CD8-positive, alpha-beta T cell (primary cell): ENCODE measurements at regions of chr6 and their contacts with region 1.

Region 1: GRCh38 chr6:108260809-108261569 is at the start of gene SNX3:
- DNase-seq: peak; percentile 76 to 95 (median 85)
- ATAC-seq: peak; percentile 79
- H3K4me3 ChIP-seq: peak within 1 kb of the TSS; percentile 64 to 76
- H3K4me3 Mint-ChIP-seq: peak within 1 kb of the TSS; percentile 89
- H3K27ac ChIP-seq: peak within 1 kb of the TSS; percentile 82 to 95
- H3K27ac Mint-ChIP-seq: peak within 1 kb of the TSS; percentile 97
- H3K4me1 ChIP-seq: peaks cover 17% of the 10 kb centered on the region
- H3K4me1 Mint-ChIP-seq: peaks cover 36% of the 10 kb centered on the region
- H3K27me3 ChIP-seq: no peaks in the 10 kb centered on the region
- H3K27me3 Mint-ChIP-seq: no peaks in the 10 kb centered on the region
- CTCF ChIP-seq: no peak
- total RNA-seq, gene SNX3: 37.0 to 40.7 TPM

Region 2: DNA sequence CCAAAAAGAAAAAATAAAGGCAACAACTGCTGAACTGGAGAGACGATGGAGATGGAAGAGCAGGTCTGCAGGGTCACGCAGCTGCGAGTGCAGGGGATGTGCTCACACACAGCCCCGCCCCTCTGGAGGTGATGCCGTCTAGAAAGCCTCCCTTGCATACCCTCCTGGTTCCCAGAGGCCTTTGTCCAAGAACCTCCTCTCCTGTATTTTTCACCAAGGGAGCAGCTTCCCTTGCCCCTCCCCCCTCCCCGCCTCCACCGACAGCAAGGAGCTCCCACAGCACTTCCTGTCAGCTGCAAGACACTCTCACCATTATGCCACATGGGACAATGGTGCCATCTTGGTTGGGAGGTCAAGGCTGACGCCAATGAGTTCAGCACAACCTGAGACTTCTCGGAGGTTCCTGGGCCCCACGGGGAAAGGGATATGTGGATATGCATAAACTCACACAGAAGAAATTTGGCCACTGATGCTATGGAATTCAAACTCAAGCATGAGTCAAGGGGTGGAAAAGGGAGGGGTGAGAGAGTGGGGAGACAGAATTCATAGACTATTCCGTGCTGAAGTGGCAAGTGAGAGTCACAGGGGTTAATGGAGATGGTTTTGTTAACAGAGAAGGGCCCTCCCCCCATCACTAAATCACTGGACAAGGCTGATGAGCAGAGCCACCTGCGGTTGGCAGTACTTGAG is 569.8 kb before region 1 on chr6:
- CTCF ChIA-PET with region 1: no interaction called
- POLR2A ChIA-PET with region 1: no interaction called
- intact Hi-C with region 1: no loop called
- DNase-seq: no peak
- ATAC-seq: no peak
- H3K4me3 ChIP-seq: no peak overlapping the region
- H3K4me3 Mint-ChIP-seq: no peak overlapping the region
- H3K27ac ChIP-seq: no peak overlapping the region
- H3K27ac Mint-ChIP-seq: no peak overlapping the region
- H3K4me1 ChIP-seq: no peaks in the 10 kb centered on the region
- H3K4me1 Mint-ChIP-seq: no peaks in the 10 kb centered on the region
- H3K27me3 ChIP-seq: no peaks in the 10 kb centered on the region
- H3K27me3 Mint-ChIP-seq: no peaks in the 10 kb centered on the region
- CTCF ChIP-seq: no peak

Region 3: GRCh38 chr6:107957909-107958688 is 302.9 kb before region 1 on chr6 and contains the start of gene SEC63:
- CTCF ChIA-PET with region 1: no interaction called
- POLR2A ChIA-PET with region 1: interaction called, 4 read pairs
- intact Hi-C with region 1: loop called in 1 of 2 experiments (anchors 2 kb)
- DNase-seq: peak; percentile 95 to 98 (median 96)
- ATAC-seq: peak; percentile 97
- H3K4me3 ChIP-seq: peak within 1 kb of the TSS; percentile 91
- H3K4me3 Mint-ChIP-seq: peak within 1 kb of the TSS; percentile 98
- H3K27ac ChIP-seq: peak within 1 kb of the TSS; percentile 81 to 82
- H3K27ac Mint-ChIP-seq: peak within 1 kb of the TSS; percentile 92
- H3K4me1 ChIP-seq: peaks cover 16% of the 10 kb centered on the region
- H3K4me1 Mint-ChIP-seq: peaks cover 37% of the 10 kb centered on the region
- H3K27me3 ChIP-seq: no peaks in the 10 kb centered on the region
- H3K27me3 Mint-ChIP-seq: no peaks in the 10 kb centered on the region
- CTCF ChIP-seq: no peak
- total RNA-seq, gene SEC63: 77.8 to 88.2 TPM

Region 4: DNA sequence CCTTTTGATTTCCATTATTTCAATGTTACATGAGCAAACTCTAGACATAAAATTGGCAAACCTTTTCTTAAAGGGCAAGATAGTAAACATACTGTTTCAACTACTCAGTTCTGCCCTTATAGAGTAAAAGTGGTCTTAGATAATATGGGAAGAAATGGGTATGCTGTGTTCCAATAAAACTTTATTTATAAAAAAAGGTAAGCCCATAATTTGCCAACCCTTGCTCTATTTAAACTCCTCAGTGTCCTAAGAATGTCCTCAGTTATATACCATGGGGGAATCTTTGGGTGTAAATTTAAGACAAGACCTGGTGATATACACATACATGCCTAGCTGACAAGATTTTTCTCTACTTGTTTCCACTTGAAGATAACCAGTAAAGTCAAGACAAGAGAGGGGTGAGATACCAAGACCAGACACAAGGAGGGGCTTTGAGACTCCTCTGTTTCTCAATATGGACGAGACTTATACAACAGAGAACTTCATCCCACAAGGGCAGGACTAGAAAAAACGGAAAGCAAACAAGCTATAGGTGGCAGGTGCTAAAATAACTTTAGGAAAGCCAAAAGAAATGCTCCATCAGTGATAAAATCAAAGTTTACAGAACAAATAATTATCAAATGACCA is 10.6 kb before region 1 on chr6:
- CTCF ChIA-PET with region 1: no interaction called
- POLR2A ChIA-PET with region 1: interaction called, 18 read pairs
- intact Hi-C with region 1: no loop called
- DNase-seq: peak in 2 of 9 experiments; percentile 22 to 48
- ATAC-seq: peak; percentile 57
- H3K4me3 ChIP-seq: no peak overlapping the region
- H3K4me3 Mint-ChIP-seq: no peak overlapping the region
- H3K27ac ChIP-seq: no peak overlapping the region
- H3K27ac Mint-ChIP-seq: no peak overlapping the region
- H3K4me1 ChIP-seq: peaks cover 6% of the 10 kb centered on the region
- H3K4me1 Mint-ChIP-seq: peaks cover 57% of the 10 kb centered on the region
- H3K27me3 ChIP-seq: no peaks in the 10 kb centered on the region
- H3K27me3 Mint-ChIP-seq: no peaks in the 10 kb centered on the region
- CTCF ChIP-seq: no peak

Region 5: GRCh38 chr6:108359901-108360882 is 99.2 kb after region 1 on chr6:
- CTCF ChIA-PET with region 1: no interaction called
- POLR2A ChIA-PET with region 1: no interaction called
- intact Hi-C with region 1: loop called in 1 of 2 experiments (anchors 5 kb)
- DNase-seq: peak in 1 of 9 experiments; percentile 5
- ATAC-seq: no peak
- H3K4me3 ChIP-seq: no peak overlapping the region
- H3K4me3 Mint-ChIP-seq: no peak overlapping the region
- H3K27ac ChIP-seq: no peak overlapping the region
- H3K27ac Mint-ChIP-seq: no peak overlapping the region
- H3K4me1 ChIP-seq: no peaks in the 10 kb centered on the region
- H3K4me1 Mint-ChIP-seq: peaks cover 3% of the 10 kb centered on the region
- H3K27me3 ChIP-seq: no peaks in the 10 kb centered on the region
- H3K27me3 Mint-ChIP-seq: no peaks in the 10 kb centered on the region
- CTCF ChIP-seq: no peak

Region 6: DNA sequence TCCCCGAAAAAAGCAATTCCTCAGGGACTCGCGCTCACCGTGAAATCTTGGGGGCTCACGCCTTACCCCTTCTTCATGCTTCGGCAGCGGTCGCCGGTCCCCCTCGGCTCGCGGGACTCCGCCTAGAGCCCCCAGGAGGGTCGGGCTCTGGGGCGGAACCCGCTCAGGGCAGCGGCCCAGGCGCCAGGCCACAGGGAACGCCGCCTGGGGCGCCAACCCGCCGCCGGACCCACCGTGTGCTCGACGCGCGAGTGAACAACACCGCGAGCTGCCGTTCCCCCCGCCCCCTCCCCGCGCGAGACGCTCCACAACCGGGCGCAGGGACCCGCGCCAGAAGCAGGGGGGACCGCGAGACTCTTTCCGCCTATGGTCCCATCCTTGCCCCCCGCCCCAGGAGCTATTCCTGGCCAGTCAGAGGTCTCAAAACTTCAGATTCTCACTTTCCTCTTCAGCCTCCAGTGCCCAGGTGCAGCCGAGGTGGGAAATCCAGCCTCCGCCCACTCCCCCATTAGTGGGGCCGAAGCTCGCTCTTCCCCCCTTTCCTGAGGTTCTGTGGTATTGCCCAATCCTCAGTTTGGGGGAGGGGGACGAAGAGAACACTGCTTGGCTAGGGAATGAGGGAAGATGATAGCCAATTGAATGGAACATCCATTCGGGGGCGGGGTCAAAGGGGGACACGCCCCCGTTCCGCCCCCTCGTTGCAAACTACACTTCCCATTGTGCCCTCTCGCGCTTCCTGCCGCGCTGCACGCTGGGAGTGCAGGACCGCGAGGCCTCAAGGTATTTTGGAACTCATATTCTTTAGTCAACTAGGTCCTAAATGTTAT is 1918.6 kb after region 1 on chr6 and contains the start of gene WASF1:
- CTCF ChIA-PET with region 1: no interaction called
- POLR2A ChIA-PET with region 1: no interaction called
- intact Hi-C with region 1: loop called in 1 of 2 experiments (anchors 10 kb)
- DNase-seq: peak; percentile 77 to 95 (median 89)
- ATAC-seq: peak; percentile 84
- H3K4me3 ChIP-seq: peak within 1 kb of the TSS; percentile 83 to 96
- H3K4me3 Mint-ChIP-seq: peak within 1 kb of the TSS; percentile 77
- H3K27ac ChIP-seq: peak within 1 kb of the TSS; percentile 72 to 79
- H3K27ac Mint-ChIP-seq: peak within 1 kb of the TSS; percentile 38
- H3K4me1 ChIP-seq: peaks cover 28% of the 10 kb centered on the region
- H3K4me1 Mint-ChIP-seq: peaks cover 7% of the 10 kb centered on the region
- H3K27me3 ChIP-seq: no peaks in the 10 kb centered on the region
- H3K27me3 Mint-ChIP-seq: peaks cover 9% of the 10 kb centered on the region
- CTCF ChIP-seq: no peak
- total RNA-seq, gene WASF1: 1.1 to 1.7 TPM